ENCODE measurements at regions of chr9 and their contacts with region 1.

Region 1: DNA sequence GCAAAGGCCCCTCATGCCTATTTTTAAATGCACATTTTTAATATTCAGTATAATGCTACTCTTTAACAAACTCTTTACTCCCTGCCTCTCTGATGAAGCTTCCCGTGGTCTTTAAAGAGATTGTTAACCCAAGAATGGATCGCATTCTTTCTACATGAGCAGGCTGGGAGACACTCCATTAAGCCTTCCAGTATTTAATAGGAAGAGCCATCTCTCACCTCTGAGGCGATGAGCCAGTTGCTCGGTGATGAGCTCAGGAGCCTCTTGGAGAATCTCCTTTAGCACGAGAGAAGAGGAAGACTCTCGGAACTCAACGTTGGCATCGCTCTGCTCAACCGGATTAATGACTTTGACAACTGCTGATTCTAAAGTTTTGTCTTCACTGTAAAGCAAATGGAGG is 59.6 kb downstream of the PRUNE2 start:
- DNase-seq: no peak
- H3K4me3 ChIP-seq: no peak overlapping the region
- H3K27ac ChIP-seq: no peak overlapping the region
- H3K4me1 ChIP-seq: no peaks in the 10 kb centered on the region
- H3K27me3 ChIP-seq: no peaks in the 10 kb centered on the region
- CTCF ChIP-seq: no peak

Region 2: DNA sequence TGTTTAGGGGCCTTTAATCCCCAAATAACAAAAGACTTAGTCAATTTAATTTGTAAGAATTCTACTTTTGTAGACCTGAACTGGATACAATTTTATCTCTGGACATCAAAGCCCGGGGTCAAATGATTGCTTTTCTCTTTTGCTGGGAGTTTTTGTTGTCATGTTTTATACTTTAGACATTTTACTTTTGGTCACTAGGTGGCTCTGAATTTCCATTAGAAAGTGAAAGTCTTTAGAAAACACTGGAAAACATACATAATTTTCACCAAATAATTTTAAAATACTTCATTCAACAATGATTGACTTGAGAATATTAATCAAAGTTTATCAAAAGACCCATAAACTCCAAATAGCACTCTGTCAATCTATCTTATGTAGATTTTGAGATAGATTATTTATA is 84.8 kb before region 1 on chr9:
- CTCF ChIA-PET with region 1: no interaction called
- dilution Hi-C with region 1: loop called (anchors 5 kb)
- in situ Hi-C with region 1: no loop called
- intact Hi-C with region 1: no loop called
- DNase-seq: no peak
- H3K4me3 ChIP-seq: no peak overlapping the region
- H3K27ac ChIP-seq: no peak overlapping the region
- H3K4me1 ChIP-seq: no peaks in the 10 kb centered on the region
- H3K27me3 ChIP-seq: no peaks in the 10 kb centered on the region
- CTCF ChIP-seq: peak; percentile 17 to 35

Region 3: DNA sequence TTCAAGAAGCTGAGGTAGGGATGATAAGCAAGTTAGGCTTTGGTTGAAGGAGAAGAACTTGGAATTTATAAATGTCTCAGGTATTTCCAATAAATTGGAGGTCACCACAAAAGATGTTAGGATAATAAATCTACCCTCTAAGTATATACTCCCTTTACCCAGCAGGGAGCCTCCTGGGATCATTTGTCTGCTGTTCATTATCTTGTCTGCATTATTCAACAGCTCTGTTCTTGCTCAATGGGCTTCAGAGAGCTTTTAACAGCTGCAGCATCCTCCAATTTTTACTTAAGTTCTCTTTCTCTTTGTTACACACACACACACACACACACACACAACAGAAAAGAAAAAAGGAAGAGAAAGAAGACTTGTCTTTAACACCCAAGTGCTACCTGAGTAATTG is 279.4 kb after region 1 on chr9:
- CTCF ChIA-PET with region 1: no interaction called
- dilution Hi-C with region 1: no loop called
- in situ Hi-C with region 1: no loop called
- intact Hi-C with region 1: no loop called
- DNase-seq: no peak
- H3K4me3 ChIP-seq: no peak overlapping the region
- H3K27ac ChIP-seq: no peak overlapping the region
- H3K4me1 ChIP-seq: no peaks in the 10 kb centered on the region
- H3K27me3 ChIP-seq: peaks cover 6% of the 10 kb centered on the region
- CTCF ChIP-seq: no peak